Right lobe of liver (tissue), 6 donors: ENCODE measurements at regions of chr9 and their contacts with region 1.

Region 1: DNA sequence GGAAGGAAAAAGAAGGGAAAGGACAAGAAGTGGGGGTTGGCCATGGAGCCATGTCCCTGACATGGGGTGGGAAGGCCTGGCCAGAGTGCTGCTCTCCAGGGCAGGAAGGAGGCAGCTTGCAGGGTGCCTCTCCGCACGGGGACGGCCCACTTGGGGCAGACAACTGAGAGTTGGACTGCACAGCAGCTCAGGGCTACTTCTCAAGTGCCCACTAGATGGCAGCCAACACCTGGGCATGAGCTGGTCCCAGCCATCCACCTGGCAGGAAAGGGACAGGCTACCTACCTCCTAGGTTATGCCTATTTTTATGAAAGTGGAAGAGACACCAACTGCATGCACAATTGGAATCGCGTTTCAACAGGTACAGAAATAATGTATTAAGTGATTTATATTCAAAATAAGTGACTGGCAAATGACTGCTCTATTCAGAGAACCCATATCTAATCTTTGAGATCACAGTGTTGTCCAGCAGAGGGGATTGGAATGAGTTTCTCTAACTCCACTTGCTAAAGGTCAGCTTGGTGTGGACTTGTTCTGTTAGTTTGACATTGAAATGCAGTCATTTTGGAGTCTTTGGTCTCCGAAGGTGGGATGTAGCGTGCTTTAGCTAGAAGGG is 113.4 kb downstream of the SYK start:
- DNase-seq: peak; percentile 78 to 83 (median 81)
- ATAC-seq: peak; percentile 91 to 94 (median 92)
- H3K4me3 ChIP-seq: no peak overlapping the region
- H3K27ac ChIP-seq: no peak overlapping the region
- H3K4me1 ChIP-seq: peaks cover 0 to 18% (median 0%) of the 10 kb centered on the region in 4 donors
- H3K27me3 ChIP-seq: no peaks in the 10 kb centered on the region
- CTCF ChIP-seq: peak; percentile 90 to 98 (median 92)
- POLR2A ChIP-seq: no peak

Region 2: GRCh38 chr9:90985631-90986030 is 70.7 kb after region 1 on chr9:
- intact Hi-C with region 1: loop called in 1 of 2 experiments (anchors 10 kb)
- DNase-seq: no peak
- ATAC-seq: no peak
- H3K4me3 ChIP-seq: no peak overlapping the region
- H3K27ac ChIP-seq: no peak overlapping the region
- H3K4me1 ChIP-seq: peaks cover 0 to 9% (median 2%) of the 10 kb centered on the region in 4 donors
- H3K27me3 ChIP-seq: no peaks in the 10 kb centered on the region
- CTCF ChIP-seq: no peak
- POLR2A ChIP-seq: no peak

Region 3: DNA sequence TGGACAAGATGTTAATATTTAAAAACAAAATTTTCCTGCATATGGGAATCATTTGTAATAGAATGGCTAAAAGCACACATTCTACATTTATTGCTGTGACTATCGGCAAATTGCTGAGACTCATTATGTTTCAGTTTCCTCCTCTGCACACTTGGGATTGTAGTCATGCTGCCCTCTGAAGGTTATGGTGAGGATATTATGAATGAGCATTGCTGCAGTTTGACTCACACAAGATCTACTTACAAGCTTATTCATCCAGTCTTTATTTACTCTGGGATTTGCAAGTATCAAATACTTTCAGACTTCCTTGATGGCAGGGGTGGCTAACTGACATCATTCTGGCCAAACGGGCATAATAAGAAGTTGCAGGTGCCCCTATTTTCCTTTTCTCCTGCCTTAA is 518.2 kb after region 1 on chr9:
- intact Hi-C with region 1: loop called (anchors 5 to 10 kb)
- DNase-seq: no peak
- ATAC-seq: peak; percentile 77 to 98 (median 82)
- H3K4me3 ChIP-seq: no peak overlapping the region
- H3K27ac ChIP-seq: no peak overlapping the region
- H3K4me1 ChIP-seq: no peaks in the 10 kb centered on the region
- H3K27me3 ChIP-seq: no peaks in the 10 kb centered on the region
- CTCF ChIP-seq: peak; percentile 48 to 58 (median 54)
- POLR2A ChIP-seq: no peak

Region 4: GRCh38 chr9:91681461-91682305 is 766.7 kb after region 1 on chr9:
- intact Hi-C with region 1: loop called in 1 of 2 experiments (anchors 10 kb)
- DNase-seq: peak; percentile 66 to 79 (median 77)
- ATAC-seq: peak; percentile 95 to 99 (median 97)
- H3K4me3 ChIP-seq: no peak overlapping the region
- H3K27ac ChIP-seq: no peak overlapping the region
- H3K4me1 ChIP-seq: no peaks in the 10 kb centered on the region
- H3K27me3 ChIP-seq: no peaks in the 10 kb centered on the region
- CTCF ChIP-seq: peak; percentile 68 to 96 (median 92)
- POLR2A ChIP-seq: no peak

Region 5: DNA sequence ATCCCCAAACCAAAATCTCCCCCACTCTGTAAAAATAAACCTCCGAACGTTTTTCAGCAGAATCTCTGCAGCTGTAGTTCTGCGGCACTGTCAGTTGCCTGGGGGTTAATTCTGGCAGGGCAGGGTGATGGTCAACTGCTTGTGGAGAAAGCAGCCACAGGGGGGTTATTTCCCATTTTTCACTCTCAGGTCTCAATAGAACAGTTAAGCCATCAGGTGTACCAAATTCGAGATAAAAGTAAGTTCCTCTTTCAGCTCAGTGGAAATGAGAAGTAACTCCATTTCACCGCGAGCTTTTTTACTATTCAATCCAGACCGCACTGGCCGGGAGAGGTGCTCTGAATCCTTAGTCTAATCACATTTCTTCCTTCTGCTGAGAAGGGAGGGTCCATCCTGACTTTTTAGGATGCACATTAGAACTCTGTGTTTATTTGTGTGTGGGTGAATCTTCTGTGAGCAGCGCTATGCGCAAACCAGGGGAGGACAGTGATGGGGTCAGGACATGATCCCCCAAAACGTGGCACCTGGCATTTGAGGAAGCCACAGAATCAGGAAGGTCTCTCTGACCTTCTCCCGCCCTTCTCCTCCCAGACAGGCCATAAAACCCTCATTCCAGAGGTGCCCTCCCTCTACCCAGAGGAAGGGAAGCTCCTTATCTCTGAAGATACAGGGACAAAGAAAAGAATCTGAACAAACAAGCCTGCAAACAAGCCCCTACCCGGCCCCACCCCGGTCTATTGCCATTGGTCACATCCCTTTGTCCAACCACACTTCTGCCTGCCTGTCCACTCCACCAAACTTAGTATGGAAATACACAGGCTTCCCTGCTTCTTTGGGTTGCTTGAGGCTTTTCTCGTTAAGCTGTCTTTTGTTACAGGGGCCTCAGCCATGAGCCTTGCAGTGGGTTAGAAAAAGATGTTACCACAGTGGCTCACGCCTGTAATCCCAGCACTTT is 806.1 kb after region 1 on chr9:
- intact Hi-C with region 1: loop called (anchors 5 to 10 kb)
- DNase-seq: no peak
- ATAC-seq: no peak
- H3K4me3 ChIP-seq: no peak overlapping the region
- H3K27ac ChIP-seq: no peak overlapping the region
- H3K4me1 ChIP-seq: no peaks in the 10 kb centered on the region
- H3K27me3 ChIP-seq: no peaks in the 10 kb centered on the region
- CTCF ChIP-seq: no peak
- POLR2A ChIP-seq: no peak

Region 6: GRCh38 chr9:91727316-91727861 is 812.4 kb after region 1 on chr9:
- intact Hi-C with region 1: loop called (anchors 5 to 10 kb)
- DNase-seq: no peak
- ATAC-seq: peak; percentile 76 to 89 (median 86)
- H3K4me3 ChIP-seq: no peak overlapping the region
- H3K27ac ChIP-seq: no peak overlapping the region
- H3K4me1 ChIP-seq: peaks cover 0 to 4% (median 0%) of the 10 kb centered on the region in 4 donors
- H3K27me3 ChIP-seq: no peaks in the 10 kb centered on the region
- CTCF ChIP-seq: peak; percentile 63 to 73 (median 66)
- POLR2A ChIP-seq: no peak